HepG2 (cell line): ENCODE measurements at regions of chr6 and their contacts with region 1.

Region 1: GRCh38 chr6:128487055-128487454 is 33.3 kb downstream of the PTPRK start:
- DNase-seq: peak; percentile 46
- ATAC-seq: peak; percentile 97
- H3K4me3 ChIP-seq: no peak overlapping the region
- H3K27ac ChIP-seq: no peak overlapping the region
- H3K4me1 ChIP-seq: peaks cover 44% of the 10 kb centered on the region
- H3K27me3 ChIP-seq: no peaks in the 10 kb centered on the region
- CTCF ChIP-seq: peak; percentile 60
- EP300 ChIP-seq: no peak
- POLR2A ChIP-seq: no peak
- RAD21 ChIP-seq: peak; percentile 72

Region 2: GRCh38 chr6:128474481-128474880 is 12.6 kb before region 1 on chr6:
- CTCF ChIA-PET with region 1: no interaction called
- POLR2A ChIA-PET with region 1: no interaction called
- in situ Hi-C with region 1: no loop called
- intact Hi-C with region 1: loop called (anchors 2 kb)
- DNase-seq: no peak
- ATAC-seq: no peak
- H3K4me3 ChIP-seq: no peak overlapping the region
- H3K27ac ChIP-seq: no peak overlapping the region
- H3K4me1 ChIP-seq: peaks cover 16% of the 10 kb centered on the region
- H3K27me3 ChIP-seq: no peaks in the 10 kb centered on the region
- CTCF ChIP-seq: no peak
- EP300 ChIP-seq: no peak
- POLR2A ChIP-seq: no peak
- RAD21 ChIP-seq: no peak

Region 3: DNA sequence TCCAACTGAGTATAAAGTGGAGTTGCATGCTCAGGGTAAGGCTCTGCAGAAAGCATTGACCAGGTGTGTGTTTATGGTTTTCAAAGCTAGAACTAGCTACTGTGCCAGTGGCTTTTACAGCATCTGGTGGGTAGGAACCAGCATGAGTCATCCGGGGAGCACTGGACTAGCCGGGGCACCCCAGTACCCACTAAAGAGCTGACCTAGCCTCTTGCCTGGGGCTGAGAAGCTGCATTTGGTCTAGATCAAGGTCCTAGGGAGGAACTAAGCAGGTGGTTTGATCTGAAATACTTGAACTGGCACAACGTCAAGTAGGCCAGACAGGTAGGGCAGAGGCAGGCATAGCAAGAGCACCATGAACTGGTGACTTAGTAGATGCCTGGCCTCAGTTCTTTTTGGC is 143.1 kb after region 1 on chr6:
- CTCF ChIA-PET with region 1: no interaction called
- POLR2A ChIA-PET with region 1: no interaction called
- in situ Hi-C with region 1: no loop called
- intact Hi-C with region 1: no loop called
- DNase-seq: no peak
- ATAC-seq: no peak
- H3K4me3 ChIP-seq: no peak overlapping the region
- H3K27ac ChIP-seq: no peak overlapping the region
- H3K4me1 ChIP-seq: no peaks in the 10 kb centered on the region
- H3K27me3 ChIP-seq: no peaks in the 10 kb centered on the region
- CTCF ChIP-seq: no peak
- EP300 ChIP-seq: no peak
- POLR2A ChIP-seq: no peak
- RAD21 ChIP-seq: no peak